Posterior vena cava (tissue), 2 donors: ENCODE measurements at regions of chr2 and their contacts with region 1.

Region 1: GRCh38 chr2:215851082-215851481 is 162.3 kb downstream of the MREG start:
- DNase-seq: no peak

Region 2: GRCh38 chr2:215241791-215242305 is 609.2 kb before region 1 on chr2:
- intact Hi-C with region 1: loop called in 1 of 2 experiments (anchors 5 kb)
- DNase-seq: no peak

Region 3: DNA sequence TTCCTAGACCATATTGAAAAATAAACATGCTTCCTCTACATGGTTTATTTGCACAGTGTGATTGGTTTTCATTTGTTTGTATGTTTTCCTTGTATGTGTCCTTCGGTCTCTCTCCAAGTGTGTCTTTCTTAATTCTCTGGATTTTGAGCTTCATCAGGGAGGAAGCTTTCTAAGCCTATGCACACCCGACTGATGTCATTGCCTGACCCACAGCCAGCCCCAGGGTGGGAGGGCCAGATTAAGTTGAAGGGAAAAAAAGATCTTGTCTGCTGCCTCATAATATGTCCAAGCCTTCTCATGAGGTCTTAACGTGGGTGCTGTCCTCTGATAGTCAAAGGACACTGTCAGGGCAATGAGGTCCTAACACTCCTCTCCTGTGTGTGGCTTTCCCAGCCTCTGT is 406.0 kb after region 1 on chr2:
- intact Hi-C with region 1: loop called in 1 of 2 experiments (anchors 5 kb)
- DNase-seq: no peak